ENCODE measurements at regions of chr1 and their contacts with region 1.

Region 1: DNA sequence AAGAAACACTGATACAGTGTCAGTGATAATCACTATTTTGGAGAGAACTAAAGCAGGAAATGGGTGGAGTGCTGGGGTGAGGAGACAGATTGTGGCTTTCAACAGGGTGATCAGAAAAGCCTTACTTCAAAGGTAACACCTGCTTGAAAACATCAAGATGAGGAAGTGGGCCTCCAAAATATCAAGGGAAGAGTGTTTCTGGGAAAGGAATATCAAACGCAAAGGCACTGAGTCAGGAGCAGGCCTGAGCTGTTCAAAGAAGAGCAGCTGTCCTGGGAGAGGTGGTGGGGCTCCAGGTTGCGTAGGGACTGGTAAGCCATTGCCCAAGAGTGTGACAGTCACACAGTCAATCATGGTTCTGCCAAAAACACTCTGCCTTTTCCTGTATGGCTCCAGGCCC is 47.1 kb upstream of the ATP1A1 start:
- DNase-seq: peak; percentile 14 to 84 (median 78)
- ATAC-seq: peak; percentile 92
- H3K4me3 ChIP-seq: peak overlapping the region; percentile 38
- H3K4me3 Mint-ChIP-seq: peak overlapping the region; percentile 25 to 83 (median 70)
- H3K27ac ChIP-seq: peak overlapping the region; percentile 73
- H3K27ac Mint-ChIP-seq: peak overlapping the region; percentile 90 to 98 (median 95)
- H3K4me1 ChIP-seq: peaks cover 48 to 88% of the 10 kb centered on the region in 2 donors
- H3K4me1 Mint-ChIP-seq: peaks cover 50 to 100% (median 93%) of the 10 kb centered on the region in 7 donors
- H3K27me3 ChIP-seq: no peaks in the 10 kb centered on the region
- H3K27me3 Mint-ChIP-seq: no peaks in the 10 kb centered on the region

Region 2: DNA sequence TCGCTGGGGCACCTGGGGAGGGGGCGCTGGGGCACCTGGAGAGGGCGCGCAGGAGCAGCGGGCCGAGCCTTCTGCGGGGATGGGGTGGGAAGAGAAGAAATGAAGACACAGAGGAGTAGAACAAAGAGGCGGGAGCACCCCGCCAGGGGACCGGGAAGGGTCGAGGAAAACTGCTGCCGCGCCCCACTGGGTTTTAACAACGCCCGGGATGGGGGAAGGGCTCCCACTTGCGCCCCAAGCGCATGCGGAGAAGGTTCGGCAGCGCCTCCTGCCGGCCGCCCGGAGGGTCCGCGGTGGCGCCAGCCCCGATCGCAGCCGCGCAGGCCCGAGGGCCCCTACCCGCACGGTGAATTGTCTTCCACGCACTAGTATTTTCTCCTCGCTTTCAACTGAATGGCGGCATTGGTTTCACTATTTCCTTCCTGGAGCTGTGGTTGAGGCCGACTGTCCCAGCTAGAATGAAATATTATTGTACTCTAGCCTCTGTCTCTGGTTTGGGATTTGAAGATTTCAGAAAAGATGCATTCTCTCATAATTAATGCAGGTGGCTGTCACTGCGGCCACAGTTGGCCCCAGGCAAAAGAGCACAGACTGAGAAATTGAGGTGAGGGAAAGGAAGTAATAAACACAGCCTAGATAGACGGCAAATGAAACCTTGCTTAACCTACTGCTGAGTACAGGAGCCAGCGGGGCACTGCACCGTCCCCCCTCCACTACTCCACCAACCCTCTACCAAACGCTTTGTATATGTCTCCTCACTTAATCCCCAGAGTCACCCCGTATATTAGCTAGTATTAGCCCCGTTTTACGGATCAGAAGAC is 157.4 kb before region 1 on chr1:
- CTCF ChIA-PET with region 1: no interaction called
- POLR2A ChIA-PET with region 1: no interaction called
- intact Hi-C with region 1: loop called in 1 of 2 experiments (anchors 5 kb)
- DNase-seq: peak; percentile 74 to 88 (median 83)
- ATAC-seq: peak; percentile 97
- H3K4me3 ChIP-seq: peak overlapping the region; percentile 75
- H3K4me3 Mint-ChIP-seq: peak overlapping the region; percentile 70 to 90 (median 88)
- H3K27ac ChIP-seq: peak overlapping the region; percentile 60
- H3K27ac Mint-ChIP-seq: peak overlapping the region; percentile 81 to 96 (median 92)
- H3K4me1 ChIP-seq: peaks cover 9% of the 10 kb centered on the region in 2 donors
- H3K4me1 Mint-ChIP-seq: peaks cover 14 to 23% (median 19%) of the 10 kb centered on the region in 7 donors
- H3K27me3 ChIP-seq: no peaks in the 10 kb centered on the region
- H3K27me3 Mint-ChIP-seq: peaks cover 0 to 14% (median 0%) of the 10 kb centered on the region in 5 donors

Region 3: DNA sequence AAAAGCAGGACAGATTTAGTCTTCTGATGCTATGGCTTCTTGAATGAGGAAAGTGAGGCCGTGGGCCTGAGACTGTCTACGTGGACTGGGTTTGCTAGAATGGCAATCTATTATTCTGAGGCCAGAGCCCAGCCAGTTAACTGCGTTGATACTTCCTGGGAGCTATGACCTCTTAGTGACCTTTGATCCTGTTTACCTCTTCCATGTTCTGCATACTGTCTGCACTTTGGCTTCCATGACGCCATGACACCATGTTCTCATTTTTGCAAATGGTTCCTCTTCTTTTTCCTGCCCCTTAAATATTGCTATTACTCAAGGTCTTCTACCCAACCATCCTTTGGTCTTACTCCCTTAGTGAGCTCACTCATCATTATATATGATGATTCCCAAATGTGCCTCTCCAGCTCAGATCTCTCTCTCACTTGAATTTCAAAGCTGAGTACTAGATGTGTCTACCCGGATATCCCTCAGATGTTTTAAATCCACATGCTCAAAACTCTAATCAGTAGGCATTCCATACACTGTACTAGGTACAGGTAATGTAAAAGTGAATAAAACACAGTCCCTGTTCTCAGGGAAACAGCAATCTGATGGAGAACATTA is 19.0 kb before region 1 on chr1:
- CTCF ChIA-PET with region 1: interaction called, 3 read pairs
- POLR2A ChIA-PET with region 1: interaction called, 15 read pairs
- intact Hi-C with region 1: loop called in 1 of 2 experiments (anchors 2 kb)
- DNase-seq: no peak
- ATAC-seq: no peak
- H3K4me3 ChIP-seq: no peak overlapping the region
- H3K4me3 Mint-ChIP-seq: no peak overlapping the region
- H3K27ac ChIP-seq: no peak overlapping the region
- H3K27ac Mint-ChIP-seq: no peak overlapping the region
- H3K4me1 ChIP-seq: peaks cover 0 to 11% of the 10 kb centered on the region in 2 donors
- H3K4me1 Mint-ChIP-seq: peaks cover 0 to 29% (median 20%) of the 10 kb centered on the region in 7 donors
- H3K27me3 ChIP-seq: no peaks in the 10 kb centered on the region
- H3K27me3 Mint-ChIP-seq: peaks cover 0 to 16% (median 0%) of the 10 kb centered on the region in 5 donors

Region 4: DNA sequence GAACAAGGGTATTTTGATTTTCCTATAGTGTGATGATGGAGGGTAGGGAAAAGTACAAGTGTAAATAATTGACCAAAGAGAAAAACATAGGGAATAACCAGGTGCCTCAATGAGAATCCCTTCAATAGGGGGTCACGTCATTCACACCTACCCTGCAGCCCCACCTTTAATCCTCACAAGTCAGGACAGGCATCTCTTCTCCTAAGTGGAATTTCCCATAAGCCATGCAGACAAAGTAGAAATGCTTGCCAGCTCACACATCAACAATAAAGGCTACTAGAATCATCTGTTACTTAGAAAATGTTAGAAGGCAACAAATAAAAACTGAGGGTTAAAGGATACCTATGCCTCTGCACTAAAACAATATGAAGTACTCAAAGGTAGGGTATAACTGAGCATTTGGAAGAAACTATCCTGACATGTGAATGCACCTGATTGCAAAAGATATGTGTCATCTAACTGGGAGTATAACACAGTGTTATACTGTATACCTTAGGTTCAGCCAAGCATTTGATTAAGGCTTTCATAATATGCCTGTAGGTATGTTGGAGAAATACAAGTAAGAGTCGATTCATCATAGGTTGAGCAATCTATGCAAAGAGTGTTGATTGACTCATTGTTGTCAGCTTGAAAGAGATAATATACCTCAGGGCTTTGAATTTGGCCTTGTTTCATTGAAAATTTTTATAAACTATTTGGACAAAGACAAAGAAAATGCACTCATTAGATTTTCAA is 14.8 kb after region 1 on chr1:
- CTCF ChIA-PET with region 1: interaction called, 4 read pairs
- POLR2A ChIA-PET with region 1: interaction called, 13 read pairs
- intact Hi-C with region 1: loop called in 1 of 2 experiments (anchors 1 kb)
- DNase-seq: no peak
- ATAC-seq: no peak
- H3K4me3 ChIP-seq: no peak overlapping the region
- H3K4me3 Mint-ChIP-seq: no peak overlapping the region
- H3K27ac ChIP-seq: no peak overlapping the region
- H3K27ac Mint-ChIP-seq: peak overlapping the region in 2 of 9 donors; percentile 46 to 62
- H3K4me1 ChIP-seq: peaks cover 4 to 41% of the 10 kb centered on the region in 2 donors
- H3K4me1 Mint-ChIP-seq: peaks cover 0 to 78% (median 62%) of the 10 kb centered on the region in 7 donors
- H3K27me3 ChIP-seq: no peaks in the 10 kb centered on the region
- H3K27me3 Mint-ChIP-seq: peaks cover 0 to 16% (median 0%) of the 10 kb centered on the region in 5 donors

Region 5: GRCh38 chr1:116360429-116361173 is 34.7 kb after region 1 on chr1:
- CTCF ChIA-PET with region 1: no interaction called
- POLR2A ChIA-PET with region 1: interaction called, 5 read pairs
- intact Hi-C with region 1: loop called in 1 of 2 experiments (anchors 1 kb)
- DNase-seq: peak in 3 of 9 donors; percentile 7 to 30 (median 15)
- ATAC-seq: no peak
- H3K4me3 ChIP-seq: no peak overlapping the region
- H3K4me3 Mint-ChIP-seq: no peak overlapping the region
- H3K27ac ChIP-seq: no peak overlapping the region
- H3K27ac Mint-ChIP-seq: peak overlapping the region in 1 of 9 donors; percentile 63
- H3K4me1 ChIP-seq: peaks cover 0 to 13% of the 10 kb centered on the region in 2 donors
- H3K4me1 Mint-ChIP-seq: peaks cover 4 to 55% (median 33%) of the 10 kb centered on the region in 7 donors
- H3K27me3 ChIP-seq: no peaks in the 10 kb centered on the region
- H3K27me3 Mint-ChIP-seq: peaks cover 0 to 24% (median 0%) of the 10 kb centered on the region in 5 donors

Region 6: DNA sequence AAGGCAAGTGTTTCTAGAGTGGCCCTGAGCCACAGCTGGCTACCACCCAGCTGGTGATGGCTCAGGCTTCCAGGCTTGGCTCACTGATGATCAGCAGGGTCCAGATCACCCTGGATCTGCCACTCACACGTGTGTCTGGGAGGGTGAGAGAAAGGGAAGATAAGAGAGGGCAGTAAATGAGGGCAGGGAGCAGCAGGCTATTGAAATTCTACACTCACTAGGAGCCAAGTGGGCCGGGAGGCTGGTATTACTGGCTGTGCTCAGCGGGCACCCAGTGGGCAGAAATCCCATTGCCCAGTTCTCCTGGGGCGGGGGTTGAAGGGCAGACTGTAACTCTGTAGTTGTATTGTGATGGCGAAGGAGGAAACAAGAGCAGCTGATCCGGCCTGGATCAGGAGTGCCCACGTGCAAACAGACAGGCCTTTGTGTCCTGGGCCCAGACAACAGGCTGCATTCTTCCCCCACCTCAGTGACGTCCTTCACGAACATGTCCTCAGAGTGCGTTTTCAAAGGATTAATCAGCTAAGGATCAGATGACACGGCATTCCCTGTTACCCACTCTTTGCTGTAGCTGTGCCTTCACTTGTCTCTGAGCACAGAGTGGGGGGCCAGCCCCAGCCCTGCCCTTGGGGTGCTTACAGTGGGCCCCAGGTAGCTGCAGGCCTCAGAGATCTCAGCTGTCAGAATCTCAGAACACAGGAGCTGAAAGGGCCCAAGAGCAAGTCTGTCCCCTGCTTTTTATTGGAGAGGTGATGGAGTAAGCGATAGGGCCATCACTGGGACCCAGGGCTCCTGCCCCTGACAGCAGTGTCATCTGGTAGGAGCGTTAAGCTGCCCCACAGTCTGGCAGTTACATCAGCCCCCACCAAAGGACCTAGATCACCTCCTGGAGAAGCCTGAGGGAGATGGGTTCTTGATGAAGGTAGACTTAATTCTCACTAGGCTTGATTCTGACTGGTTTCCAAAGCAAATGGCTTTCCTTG is 107.6 kb after region 1 on chr1:
- CTCF ChIA-PET with region 1: no interaction called
- POLR2A ChIA-PET with region 1: no interaction called
- intact Hi-C with region 1: no loop called
- DNase-seq: no peak
- ATAC-seq: peak; percentile 26
- H3K4me3 ChIP-seq: no peak overlapping the region
- H3K4me3 Mint-ChIP-seq: no peak overlapping the region
- H3K27ac ChIP-seq: no peak overlapping the region
- H3K27ac Mint-ChIP-seq: no peak overlapping the region
- H3K4me1 ChIP-seq: no peaks in the 10 kb centered on the region
- H3K4me1 Mint-ChIP-seq: no peaks in the 10 kb centered on the region
- H3K27me3 ChIP-seq: no peaks in the 10 kb centered on the region
- H3K27me3 Mint-ChIP-seq: peaks cover 0 to 19% (median 0%) of the 10 kb centered on the region in 5 donors

Measured in naive thymus-derived CD4-positive, alpha-beta T cell (primary cell).